Mammary epithelial cell (primary cell): ENCODE measurements at regions of chr5 and their contacts with region 1.

Region 1: DNA sequence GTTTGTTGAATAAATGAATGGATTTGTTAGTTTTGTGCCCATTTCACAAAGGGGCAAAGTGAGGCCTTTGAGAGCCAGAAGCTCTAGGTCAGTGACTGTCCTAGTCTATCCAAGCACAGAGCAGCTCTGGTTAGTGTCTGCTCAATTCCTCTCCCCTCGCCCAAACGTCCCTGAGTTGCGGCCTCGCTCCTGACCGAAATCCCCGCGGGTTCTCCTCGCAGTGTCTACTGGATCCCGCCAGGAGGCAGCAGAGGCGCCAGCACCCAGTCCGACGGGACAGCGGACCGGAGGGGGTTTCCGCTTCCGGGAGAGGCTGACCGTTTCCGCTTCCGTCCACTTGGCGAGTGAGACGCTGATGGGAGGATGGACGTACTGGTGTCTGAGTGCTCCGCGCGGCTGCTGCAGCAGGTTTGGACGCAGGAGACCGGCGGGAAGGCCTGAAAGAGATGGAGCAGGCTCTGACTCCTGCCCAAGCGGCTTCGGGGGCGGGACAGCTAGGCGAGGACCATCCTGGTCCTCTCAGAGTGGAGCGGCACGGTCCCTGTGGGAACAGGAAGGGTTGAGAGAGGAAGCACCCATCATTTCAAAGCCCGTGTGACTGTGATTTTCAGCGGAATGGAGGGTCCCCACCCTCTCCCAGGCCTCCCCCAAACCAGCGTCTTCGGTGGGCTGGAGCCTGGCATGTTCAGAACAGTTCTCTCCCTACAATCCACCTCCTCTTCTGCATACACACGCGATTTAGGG is at the start of gene RARS1:
- DNase-seq: peak; percentile 88
- H3K4me3 ChIP-seq: peak within 1 kb of the TSS; percentile 77 to 95 (median 88)
- H3K27ac ChIP-seq: peak within 1 kb of the TSS; percentile 70
- H3K4me1 ChIP-seq: peaks cover 7% of the 10 kb centered on the region
- H3K27me3 ChIP-seq: no peaks in the 10 kb centered on the region
- CTCF ChIP-seq: peak; percentile 92 to 99
- total RNA-seq, gene RARS1: 107 to 132 TPM

Region 2: GRCh38 chr5:167587772-167588437 is 898.4 kb before region 1 on chr5:
- CTCF ChIA-PET with region 1: no interaction called
- dilution Hi-C with region 1: no loop called
- in situ Hi-C with region 1: no loop called
- intact Hi-C with region 1: loop called (anchors 10 kb)
- DNase-seq: peak; percentile 30
- H3K4me3 ChIP-seq: no peak overlapping the region
- H3K27ac ChIP-seq: no peak overlapping the region
- H3K4me1 ChIP-seq: no peaks in the 10 kb centered on the region
- H3K27me3 ChIP-seq: no peaks in the 10 kb centered on the region
- CTCF ChIP-seq: peak; percentile 48 to 67

Region 3: GRCh38 chr5:168472329-168472728 is 14.0 kb before region 1 on chr5:
- CTCF ChIA-PET with region 1: interaction called, 14 read pairs
- dilution Hi-C with region 1: no loop called
- in situ Hi-C with region 1: no loop called
- intact Hi-C with region 1: no loop called
- DNase-seq: peak; percentile 84
- H3K4me3 ChIP-seq: no peak overlapping the region
- H3K27ac ChIP-seq: no peak overlapping the region
- H3K4me1 ChIP-seq: peaks cover 16% of the 10 kb centered on the region
- H3K27me3 ChIP-seq: no peaks in the 10 kb centered on the region
- CTCF ChIP-seq: peak; percentile 53 to 59

Region 4: DNA sequence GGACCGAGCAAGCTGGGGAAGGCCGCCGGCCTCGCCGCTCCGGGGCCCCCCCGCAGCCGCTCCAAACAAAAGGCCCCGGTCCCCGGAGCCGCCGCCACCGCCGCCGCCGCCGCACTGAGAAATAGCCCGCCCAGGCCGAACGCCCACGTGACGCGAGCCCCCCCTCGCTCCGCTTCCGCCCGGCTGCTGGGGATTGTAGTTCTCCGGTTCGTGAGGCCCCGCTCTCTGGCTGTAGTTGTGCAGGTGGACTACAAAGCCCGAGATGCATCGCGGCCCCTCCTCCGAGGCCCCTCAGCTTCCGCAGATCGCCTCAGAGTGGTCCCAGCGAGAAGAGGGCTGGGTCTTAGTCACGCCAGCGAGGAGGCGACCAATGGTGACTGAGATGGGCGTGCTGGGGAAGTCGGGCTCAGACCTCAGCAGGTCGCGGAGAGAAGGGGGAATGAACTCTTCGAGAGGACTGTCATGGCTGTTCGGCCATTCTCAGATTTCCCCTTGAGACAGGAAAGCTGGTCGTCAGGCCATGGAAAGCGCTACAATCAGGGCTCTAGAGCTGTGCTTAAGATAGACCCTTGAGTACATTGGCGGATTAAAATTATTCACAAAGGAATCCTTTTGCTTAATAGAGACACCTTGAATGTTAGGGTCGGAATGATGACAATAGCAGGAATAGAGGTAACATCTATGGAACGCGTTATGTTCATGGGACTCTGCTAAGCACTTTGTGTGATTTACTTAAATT is 93.3 kb after region 1 on chr5:
- CTCF ChIA-PET with region 1: no interaction called
- dilution Hi-C with region 1: no loop called
- in situ Hi-C with region 1: no loop called
- intact Hi-C with region 1: loop called (anchors 5 kb)
- DNase-seq: peak; percentile 99
- H3K4me3 ChIP-seq: peak overlapping the region; percentile 60 to 96 (median 95)
- H3K27ac ChIP-seq: peak overlapping the region; percentile 91
- H3K4me1 ChIP-seq: peaks cover 15% of the 10 kb centered on the region
- H3K27me3 ChIP-seq: no peaks in the 10 kb centered on the region
- CTCF ChIP-seq: no peak

Region 5: DNA sequence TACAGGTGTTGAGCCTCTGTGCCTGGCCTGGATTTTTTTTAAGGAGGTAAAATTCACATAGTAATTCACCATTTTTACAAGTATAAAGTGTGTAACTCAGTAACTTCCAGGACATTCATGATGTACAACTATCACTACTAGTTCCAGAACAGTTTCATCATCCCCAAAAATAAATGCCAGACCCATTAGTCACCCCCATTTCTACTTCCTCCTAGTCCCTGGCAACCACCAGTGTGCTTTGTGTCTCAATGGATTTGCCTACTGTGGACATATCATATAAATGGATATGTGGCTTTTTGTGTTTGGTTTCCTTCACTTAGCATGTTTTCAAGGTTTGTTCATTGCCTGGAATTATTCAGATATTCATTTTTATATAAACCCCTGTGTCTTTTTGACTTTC is 165.3 kb after region 1 on chr5:
- CTCF ChIA-PET with region 1: no interaction called
- dilution Hi-C with region 1: no loop called
- in situ Hi-C with region 1: no loop called
- intact Hi-C with region 1: loop called (anchors 10 kb)
- DNase-seq: peak; percentile 82
- H3K4me3 ChIP-seq: no peak overlapping the region
- H3K27ac ChIP-seq: peak overlapping the region; percentile 38
- H3K4me1 ChIP-seq: peaks cover 49% of the 10 kb centered on the region
- H3K27me3 ChIP-seq: no peaks in the 10 kb centered on the region
- CTCF ChIP-seq: no peak